Activated CD8-positive, alpha-beta memory T cell treated with anti-CD3 and anti-CD28 coated beads, Interleukin-2, amount 10 ng/mL, durations not matched to agents 7 days and 5 days (primary cell): ENCODE measurements at regions of chr1 and their contacts with region 1.

Region 1: DNA sequence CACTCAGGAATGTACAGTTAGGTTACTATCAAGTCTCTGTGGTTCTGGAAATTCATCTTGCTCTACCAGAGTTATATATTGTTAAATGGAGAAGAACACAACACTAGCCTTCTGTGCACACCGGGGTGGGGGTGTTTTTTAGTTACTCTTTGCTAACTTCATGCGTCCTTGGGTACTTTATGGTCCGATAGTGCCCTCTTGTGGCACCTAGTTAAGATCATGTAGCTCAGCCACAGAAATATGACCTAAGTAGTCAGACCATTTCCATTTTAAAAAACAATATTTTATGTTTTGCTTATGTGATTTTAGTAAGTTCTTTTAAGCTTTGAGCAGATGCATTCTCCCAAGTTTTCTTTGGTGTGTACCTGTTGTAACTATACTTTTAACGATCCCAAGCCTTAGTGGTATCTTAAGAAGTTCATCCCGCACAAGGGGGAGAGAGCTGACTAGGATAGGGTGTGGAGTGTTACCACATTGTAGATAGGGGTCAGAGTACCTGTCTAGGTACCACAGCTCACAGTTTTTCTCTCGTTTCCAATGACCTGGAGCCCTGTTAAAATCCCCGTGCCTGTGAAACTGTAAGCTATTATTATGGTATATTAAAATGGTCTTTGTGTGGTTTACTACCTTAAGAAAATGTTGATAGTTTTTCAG is 20.6 kb upstream of the SH3D21 start:
- DNase-seq: peak; percentile 79
- ATAC-seq: peak; percentile 93
- H3K4me3 Mint-ChIP-seq: no peak overlapping the region
- H3K27ac Mint-ChIP-seq: peak overlapping the region; percentile 68
- H3K4me1 Mint-ChIP-seq: peaks cover 17% of the 10 kb centered on the region
- H3K27me3 Mint-ChIP-seq: no peaks in the 10 kb centered on the region

Region 2: DNA sequence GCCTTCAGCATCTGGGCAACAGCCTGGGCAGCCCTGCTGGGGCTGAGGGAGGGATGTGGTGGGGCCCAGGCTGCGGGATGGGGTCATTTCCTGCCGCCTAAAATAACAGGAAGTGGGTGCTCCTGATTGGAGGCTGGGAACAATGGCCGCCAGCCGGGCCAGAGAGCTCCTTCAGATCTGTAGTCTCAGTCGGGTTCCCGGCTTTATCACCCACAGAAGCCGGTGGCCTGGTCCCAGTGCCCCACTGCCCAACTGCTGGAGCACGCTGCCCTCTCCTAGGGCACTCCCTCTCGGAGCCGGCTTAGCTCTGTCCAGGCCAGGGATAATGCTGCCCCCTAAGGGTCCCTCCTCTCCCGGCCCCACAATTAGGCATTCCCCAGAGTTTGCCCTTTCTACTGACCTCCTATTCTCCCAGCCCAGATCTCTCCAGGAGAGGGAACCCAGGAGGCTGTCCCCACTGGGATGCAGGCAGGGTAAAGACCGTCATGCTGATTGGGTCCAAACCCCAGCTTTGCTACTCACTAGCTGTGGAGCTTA is 124.6 kb before region 1 on chr1:
- CTCF ChIA-PET with region 1: interaction called, 15 read pairs
- DNase-seq: peak; percentile 89
- ATAC-seq: peak; percentile 52
- H3K4me3 Mint-ChIP-seq: peak overlapping the region; percentile 82
- H3K27ac Mint-ChIP-seq: peak overlapping the region; percentile 94
- H3K4me1 Mint-ChIP-seq: peaks cover 65% of the 10 kb centered on the region
- H3K27me3 Mint-ChIP-seq: no peaks in the 10 kb centered on the region

Region 3: DNA sequence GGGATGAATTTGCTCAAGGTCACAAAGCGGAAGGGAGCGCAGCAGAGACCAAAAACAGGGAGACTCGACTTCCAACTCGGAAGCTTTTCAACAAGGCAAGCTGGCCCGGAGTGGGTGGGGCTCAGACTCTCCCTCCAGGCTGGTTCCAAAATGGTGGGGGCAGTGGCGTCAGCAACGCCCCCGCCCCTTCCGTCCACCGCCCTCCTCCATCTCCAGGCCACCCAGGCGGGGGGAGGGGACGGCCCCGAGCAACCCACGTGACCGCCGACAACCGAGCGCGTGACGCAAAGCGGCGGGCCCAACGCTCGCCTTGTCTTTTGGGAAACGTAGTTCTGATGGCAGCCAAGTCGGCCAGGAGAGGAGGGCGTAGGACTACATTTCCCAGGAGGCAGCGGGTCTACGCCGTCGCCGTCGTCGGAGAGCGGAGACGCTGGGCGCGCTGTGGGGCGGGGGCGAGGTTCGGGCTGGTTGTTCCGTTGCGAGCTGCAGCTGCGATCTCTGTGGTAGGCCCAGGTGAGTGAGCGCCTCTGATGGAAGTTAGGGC is 61.5 kb before region 1 on chr1 and contains the start of gene THRAP3:
- CTCF ChIA-PET with region 1: interaction called, 19 read pairs
- DNase-seq: peak; percentile 100
- ATAC-seq: peak; percentile 92
- H3K4me3 Mint-ChIP-seq: peak within 1 kb of the TSS; percentile 94
- H3K27ac Mint-ChIP-seq: peak within 1 kb of the TSS; percentile 100
- H3K4me1 Mint-ChIP-seq: peaks cover 27% of the 10 kb centered on the region
- H3K27me3 Mint-ChIP-seq: no peaks in the 10 kb centered on the region
- total RNA-seq, gene THRAP3: 129 to 166 TPM

Region 4: DNA sequence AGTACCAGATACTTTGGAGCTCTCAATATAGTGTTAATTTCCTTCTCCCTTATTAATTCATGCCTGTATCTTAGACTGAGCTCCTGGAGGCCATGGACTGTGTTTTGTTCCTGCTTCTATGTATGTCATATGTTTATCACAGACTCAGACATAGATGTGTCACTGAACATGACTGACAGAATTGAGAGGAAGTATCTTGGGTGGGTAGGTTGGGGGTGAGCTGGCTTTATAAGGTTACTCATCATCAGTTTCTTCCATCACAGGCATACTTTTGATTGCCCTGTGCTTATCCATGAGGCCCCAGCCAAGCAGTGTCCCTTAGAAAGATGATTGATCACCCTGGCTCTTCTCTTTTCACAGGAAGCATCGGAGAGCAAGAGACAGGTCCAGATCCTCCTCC is 15.0 kb after region 1 on chr1:
- CTCF ChIA-PET with region 1: interaction called, 10 read pairs
- DNase-seq: no peak
- ATAC-seq: no peak
- H3K4me3 Mint-ChIP-seq: no peak overlapping the region
- H3K27ac Mint-ChIP-seq: peak overlapping the region; percentile 12
- H3K4me1 Mint-ChIP-seq: peaks cover 12% of the 10 kb centered on the region
- H3K27me3 Mint-ChIP-seq: no peaks in the 10 kb centered on the region